Endothelial cell of umbilical vein (primary cell): ENCODE measurements at regions of chr6 and their contacts with region 1.

Region 1: GRCh38 chr6:34459899-34460593 is 5.8 kb upstream of the PACSIN1 start:
- DNase-seq: peak; percentile 60
- H3K4me3 ChIP-seq: no peak overlapping the region
- H3K27ac ChIP-seq: no peak overlapping the region
- H3K4me1 ChIP-seq: no peaks in the 10 kb centered on the region
- H3K27me3 ChIP-seq: peaks cover 0 to 10% of the 10 kb centered on the region in 2 experiments
- CTCF ChIP-seq: peak; percentile 61 to 70
- POLR2A ChIP-seq: no peak

Region 2: DNA sequence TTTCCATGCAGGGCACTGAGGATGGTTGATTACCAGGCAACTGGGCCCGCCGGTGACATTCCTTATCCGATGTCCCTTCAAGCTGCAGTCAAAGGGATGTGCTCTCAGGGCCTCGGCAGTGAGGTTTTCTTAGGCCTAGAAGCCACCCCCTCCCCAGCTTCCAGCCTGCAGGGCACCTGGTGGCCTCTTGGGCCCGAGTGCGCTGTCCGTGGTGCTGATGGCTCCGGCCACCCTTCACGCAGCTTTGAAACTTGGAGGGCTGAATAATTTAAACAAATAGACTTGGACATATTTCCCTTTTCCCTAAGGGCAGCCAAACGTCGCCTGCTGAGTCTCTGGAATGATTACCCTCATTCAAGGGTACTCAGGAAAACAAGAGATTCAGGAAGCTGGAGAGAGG is 647.4 kb before region 1 on chr6:
- CTCF ChIA-PET with region 1: no interaction called
- POLR2A ChIA-PET with region 1: no interaction called
- dilution Hi-C with region 1: no loop called
- intact Hi-C with region 1: no loop called
- DNase-seq: peak; percentile 52
- H3K4me3 ChIP-seq: no peak overlapping the region
- H3K27ac ChIP-seq: no peak overlapping the region
- H3K4me1 ChIP-seq: no peaks in the 10 kb centered on the region
- H3K27me3 ChIP-seq: peaks cover 6 to 23% of the 10 kb centered on the region in 2 experiments
- CTCF ChIP-seq: peak; percentile 9 to 59
- POLR2A ChIP-seq: no peak

Region 3: DNA sequence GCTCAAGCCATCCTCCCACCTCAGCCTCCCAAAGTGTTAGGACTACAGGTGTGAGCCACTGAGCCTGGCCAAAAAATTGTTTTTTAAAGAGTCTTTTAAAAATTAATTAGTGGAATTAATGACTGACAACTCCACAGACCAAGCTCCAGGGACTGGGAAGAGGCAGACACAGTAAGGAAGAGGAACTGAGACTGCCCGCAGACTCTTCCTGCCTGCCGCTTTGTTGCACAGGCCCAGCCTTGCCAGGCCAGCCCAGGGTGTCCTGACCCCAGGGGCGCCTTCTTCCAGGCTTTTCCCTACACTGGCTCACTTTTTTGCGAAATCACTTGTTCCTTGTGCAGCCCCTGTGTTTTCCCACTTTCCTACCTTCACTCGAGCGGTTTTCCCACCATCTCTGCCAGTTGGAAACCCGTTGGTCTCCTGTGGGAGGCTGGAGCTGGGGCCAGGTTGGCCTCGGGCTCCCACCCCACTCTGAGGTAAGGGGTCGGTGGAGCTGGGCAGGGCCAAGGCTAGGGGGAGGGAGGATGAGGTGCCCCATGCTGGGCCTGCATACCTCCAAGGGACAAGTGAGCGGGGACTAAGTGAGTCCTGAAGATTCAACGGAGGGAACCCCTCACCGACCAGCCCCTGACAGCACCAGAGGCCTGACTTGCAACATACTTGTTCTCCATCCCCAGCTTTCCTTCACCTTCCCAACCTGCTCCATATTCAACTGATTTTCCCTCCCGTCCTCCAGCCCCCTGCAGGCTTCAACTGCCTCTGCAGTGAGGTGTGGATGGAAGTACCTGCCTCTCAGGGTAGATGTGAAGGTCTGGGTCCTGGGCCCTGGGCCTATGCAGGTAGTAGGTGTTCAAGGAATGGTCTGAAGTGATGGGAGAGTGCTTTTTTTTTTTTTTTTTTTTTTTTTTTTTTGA is 187.8 kb before region 1 on chr6:
- CTCF ChIA-PET with region 1: no interaction called
- POLR2A ChIA-PET with region 1: no interaction called
- dilution Hi-C with region 1: no loop called
- intact Hi-C with region 1: no loop called
- DNase-seq: no peak
- H3K4me3 ChIP-seq: no peak overlapping the region
- H3K27ac ChIP-seq: peak overlapping the region; percentile 5
- H3K4me1 ChIP-seq: peaks cover 18% of the 10 kb centered on the region
- H3K27me3 ChIP-seq: no peaks in the 10 kb centered on the region
- CTCF ChIP-seq: peak; percentile 10 to 14
- POLR2A ChIP-seq: no peak

Region 4: GRCh38 chr6:34447910-34448309 is 12.1 kb before region 1 on chr6:
- CTCF ChIA-PET with region 1: interaction called, 17 read pairs
- POLR2A ChIA-PET with region 1: no interaction called
- dilution Hi-C with region 1: no loop called
- intact Hi-C with region 1: no loop called
- DNase-seq: no peak
- H3K4me3 ChIP-seq: no peak overlapping the region
- H3K27ac ChIP-seq: no peak overlapping the region
- H3K4me1 ChIP-seq: no peaks in the 10 kb centered on the region
- H3K27me3 ChIP-seq: peaks cover 2 to 3% of the 10 kb centered on the region in 2 experiments
- CTCF ChIP-seq: no peak
- POLR2A ChIP-seq: no peak

Region 5: DNA sequence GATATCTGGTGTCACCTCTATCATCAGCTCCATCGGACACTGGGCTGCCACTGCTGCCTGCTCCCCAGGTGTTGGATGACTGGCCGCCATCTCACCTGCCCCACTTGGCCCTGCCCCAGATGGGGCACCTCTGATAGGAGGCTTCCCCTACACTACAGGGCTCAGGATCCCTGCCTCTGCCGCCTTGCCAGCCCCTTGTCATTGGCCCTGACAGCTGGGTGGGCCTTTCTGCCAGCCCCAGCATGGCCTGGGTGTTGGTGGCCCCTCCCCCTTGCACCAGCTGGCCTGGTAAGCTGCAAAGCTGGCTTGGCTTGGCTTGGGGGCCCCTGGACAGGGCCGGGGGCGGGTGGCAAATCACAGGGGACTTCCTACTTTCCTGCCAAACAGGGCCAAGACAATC is 16.4 kb after region 1 on chr6:
- CTCF ChIA-PET with region 1: interaction called, 19 read pairs
- POLR2A ChIA-PET with region 1: no interaction called
- dilution Hi-C with region 1: no loop called
- intact Hi-C with region 1: no loop called
- DNase-seq: no peak
- H3K4me3 ChIP-seq: no peak overlapping the region
- H3K27ac ChIP-seq: no peak overlapping the region
- H3K4me1 ChIP-seq: no peaks in the 10 kb centered on the region
- H3K27me3 ChIP-seq: no peaks in the 10 kb centered on the region
- CTCF ChIP-seq: no peak
- POLR2A ChIP-seq: no peak

Region 6: DNA sequence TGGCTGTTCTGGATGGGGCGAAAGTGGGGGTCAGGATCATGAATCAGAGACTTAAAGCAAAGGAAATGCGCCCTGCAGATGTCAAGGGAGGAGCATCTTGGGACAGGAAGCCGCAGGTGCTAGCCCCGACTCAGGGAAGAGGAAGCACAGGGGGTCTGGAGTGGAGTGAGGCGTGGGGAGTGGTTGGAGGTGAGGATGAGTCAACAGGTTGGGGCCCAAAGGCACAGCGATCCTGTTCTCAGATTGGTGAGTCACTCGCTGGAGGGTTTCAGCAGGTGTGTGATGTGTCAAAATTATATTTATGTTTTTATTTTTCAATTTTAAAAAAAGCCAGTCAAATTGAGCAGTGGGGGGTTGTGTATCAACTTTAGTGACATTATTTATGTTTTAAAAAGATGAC is 24.9 kb after region 1 on chr6:
- CTCF ChIA-PET with region 1: interaction called, 10 read pairs
- POLR2A ChIA-PET with region 1: no interaction called
- dilution Hi-C with region 1: no loop called
- intact Hi-C with region 1: no loop called
- DNase-seq: no peak
- H3K4me3 ChIP-seq: no peak overlapping the region
- H3K27ac ChIP-seq: no peak overlapping the region
- H3K4me1 ChIP-seq: no peaks in the 10 kb centered on the region
- H3K27me3 ChIP-seq: no peaks in the 10 kb centered on the region
- CTCF ChIP-seq: no peak
- POLR2A ChIP-seq: no peak

Region 7: GRCh38 chr6:34526992-34527728 is 67.1 kb after region 1 on chr6:
- CTCF ChIA-PET with region 1: interaction called, 15 read pairs
- POLR2A ChIA-PET with region 1: no interaction called
- dilution Hi-C with region 1: no loop called
- intact Hi-C with region 1: no loop called
- DNase-seq: peak; percentile 89
- H3K4me3 ChIP-seq: peak overlapping the region in 2 of 3 experiments; percentile 4 to 42
- H3K27ac ChIP-seq: no peak overlapping the region
- H3K4me1 ChIP-seq: peaks cover 2% of the 10 kb centered on the region
- H3K27me3 ChIP-seq: no peaks in the 10 kb centered on the region
- CTCF ChIP-seq: peak; percentile 56 to 86
- POLR2A ChIP-seq: peak; percentile 42

Region 8: DNA sequence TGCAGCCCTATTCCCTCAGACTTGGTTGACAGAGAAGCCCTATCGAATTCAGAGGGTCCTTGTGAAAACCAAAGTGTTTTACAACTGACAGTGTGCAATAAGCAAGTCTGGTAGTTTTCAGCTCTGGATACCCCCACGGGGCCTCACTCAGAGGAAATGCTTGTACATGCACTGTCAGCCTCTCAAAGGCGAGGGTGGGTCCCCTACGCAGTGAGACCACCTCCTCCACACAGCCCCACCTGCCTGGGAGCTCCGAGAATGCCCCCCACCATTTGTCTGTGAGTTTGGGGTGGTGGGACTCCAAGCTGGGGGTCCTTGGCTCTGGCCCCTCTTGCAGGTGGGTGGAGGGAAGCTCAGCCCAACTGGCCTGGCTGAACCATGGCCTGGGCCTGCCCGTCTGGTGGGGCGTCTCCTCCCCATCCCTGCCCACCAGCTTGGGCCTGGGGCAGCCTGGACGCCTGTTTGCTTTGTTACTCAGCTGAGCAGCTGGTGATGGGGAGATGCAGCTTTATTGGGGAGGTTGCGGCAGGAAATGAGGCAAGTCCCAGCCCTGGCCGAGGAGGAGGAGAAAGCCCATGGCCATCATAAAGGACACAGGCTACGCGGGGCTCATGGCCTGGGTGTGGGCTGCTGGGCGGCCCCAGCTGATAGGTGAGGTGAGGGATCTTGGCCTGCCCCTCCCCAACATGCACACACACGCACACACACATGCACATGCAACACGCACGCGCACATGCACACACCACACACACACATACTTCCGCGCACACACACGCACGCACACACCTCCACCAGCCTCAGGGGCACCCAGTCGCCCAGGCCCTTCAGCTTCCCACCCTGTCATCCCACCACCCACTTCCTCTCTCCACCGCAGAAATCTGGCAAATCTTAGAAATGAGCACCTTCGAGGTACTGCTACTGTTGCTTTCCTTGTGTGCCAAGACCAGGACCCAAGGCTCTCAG is 94.6 kb after region 1 on chr6:
- CTCF ChIA-PET with region 1: no interaction called
- POLR2A ChIA-PET with region 1: no interaction called
- dilution Hi-C with region 1: no loop called
- intact Hi-C with region 1: no loop called
- DNase-seq: no peak
- H3K4me3 ChIP-seq: no peak overlapping the region
- H3K27ac ChIP-seq: no peak overlapping the region
- H3K4me1 ChIP-seq: no peaks in the 10 kb centered on the region
- H3K27me3 ChIP-seq: no peaks in the 10 kb centered on the region
- CTCF ChIP-seq: no peak
- POLR2A ChIP-seq: no peak

Region 9: DNA sequence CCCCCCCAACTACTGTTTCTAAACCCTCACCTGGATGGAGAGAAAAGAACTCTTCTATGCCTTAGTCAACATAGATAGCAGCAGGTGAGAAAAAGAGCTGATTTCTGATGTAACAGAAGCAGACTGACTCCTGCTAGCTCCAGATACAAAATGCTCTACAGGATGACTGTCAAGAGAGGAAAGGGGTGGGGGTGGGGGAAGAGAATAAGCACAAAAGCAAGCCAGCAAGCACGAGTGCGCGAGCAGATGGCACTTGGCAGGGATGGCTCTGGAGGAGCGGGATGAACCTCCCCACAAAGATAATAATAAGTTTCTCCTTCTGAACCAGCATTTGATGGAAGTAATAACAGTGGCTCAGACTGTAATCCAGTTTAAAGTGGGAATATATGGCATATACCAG is 141.7 kb after region 1 on chr6:
- CTCF ChIA-PET with region 1: interaction called, 114 read pairs
- POLR2A ChIA-PET with region 1: no interaction called
- dilution Hi-C with region 1: no loop called
- intact Hi-C with region 1: no loop called
- DNase-seq: no peak
- H3K4me3 ChIP-seq: no peak overlapping the region
- H3K27ac ChIP-seq: no peak overlapping the region
- H3K4me1 ChIP-seq: no peaks in the 10 kb centered on the region
- H3K27me3 ChIP-seq: no peaks in the 10 kb centered on the region
- CTCF ChIP-seq: no peak
- POLR2A ChIP-seq: no peak

Region 10: DNA sequence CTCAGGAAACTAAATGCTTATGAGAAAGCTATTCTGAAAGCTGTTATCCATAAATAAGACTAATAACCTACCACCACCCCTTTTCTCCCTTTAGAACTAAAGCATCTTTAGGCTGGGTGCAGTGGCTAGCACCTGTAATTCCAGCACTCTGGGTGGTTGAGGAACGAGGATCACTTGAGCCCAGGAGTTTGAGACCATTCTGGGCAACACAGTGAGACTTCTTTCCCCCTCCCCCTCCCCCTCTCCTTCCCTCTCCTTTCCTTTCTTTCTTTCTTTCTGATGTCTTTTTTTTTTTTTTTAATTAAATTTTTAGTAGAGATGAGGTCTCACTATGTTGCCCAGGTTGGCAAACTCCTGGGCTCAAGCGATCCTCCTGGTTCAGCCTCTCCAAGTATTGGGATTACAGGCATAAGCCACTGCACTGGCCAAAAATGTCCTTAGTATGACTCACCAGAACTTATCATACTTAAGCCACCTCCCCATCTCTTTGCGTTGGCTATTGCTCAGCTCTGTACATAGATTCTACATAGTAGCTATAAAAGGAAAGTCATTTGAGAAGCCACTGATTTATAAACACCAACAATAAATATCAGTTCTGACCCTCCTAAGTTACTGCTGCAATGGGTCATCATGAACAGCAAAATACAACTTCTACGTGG is 150.9 kb after region 1 on chr6:
- CTCF ChIA-PET with region 1: interaction called, 114 read pairs
- POLR2A ChIA-PET with region 1: no interaction called
- dilution Hi-C with region 1: no loop called
- intact Hi-C with region 1: loop called (anchors 1 kb)
- DNase-seq: peak; percentile 51
- H3K4me3 ChIP-seq: no peak overlapping the region
- H3K27ac ChIP-seq: peak overlapping the region; percentile 65
- H3K4me1 ChIP-seq: peaks cover 10% of the 10 kb centered on the region
- H3K27me3 ChIP-seq: no peaks in the 10 kb centered on the region
- CTCF ChIP-seq: no peak
- POLR2A ChIP-seq: no peak